Aorta (tissue), 5 donors: ENCODE measurements at regions of chr17 and their contacts with region 1.

Region 1: DNA sequence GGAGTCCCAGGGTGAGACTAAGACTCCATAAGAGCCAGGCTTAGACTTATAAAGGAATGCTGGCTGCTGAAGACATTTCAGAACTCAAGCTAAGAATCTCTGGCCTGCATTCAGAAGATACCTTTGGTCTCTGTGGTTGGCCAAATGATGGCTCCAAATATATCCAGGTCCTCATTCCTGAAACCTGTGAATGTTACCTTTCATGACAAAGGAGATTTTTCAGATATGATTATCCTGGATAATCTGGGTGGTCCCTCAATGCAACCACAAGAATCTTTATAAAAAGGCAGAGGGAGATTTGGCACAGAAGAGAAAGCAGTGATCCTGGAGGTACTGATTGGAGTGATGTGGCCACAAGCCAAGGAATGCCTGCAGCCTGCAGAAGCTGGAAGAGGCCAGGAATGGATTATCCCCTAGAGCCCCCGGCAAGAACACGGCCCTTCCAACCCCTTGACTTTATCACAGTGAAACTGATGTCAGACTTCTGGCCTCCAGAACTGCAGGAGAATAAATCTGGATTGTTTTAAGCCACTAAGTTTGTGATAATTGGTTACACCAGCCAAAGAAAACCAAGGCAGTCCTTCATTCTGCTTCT is 253.3 kb downstream of the SLC39A11 start:
- DNase-seq: no peak
- ATAC-seq: no peak
- H3K4me3 ChIP-seq: no peak overlapping the region
- H3K27ac ChIP-seq: no peak overlapping the region
- H3K4me1 ChIP-seq: no peaks in the 10 kb centered on the region
- H3K27me3 ChIP-seq: no peaks in the 10 kb centered on the region

Region 2: GRCh38 chr17:72775919-72776318 is 63.3 kb before region 1 on chr17:
- intact Hi-C with region 1: loop called in 1 of 2 experiments (anchors 10 kb)
- DNase-seq: no peak
- ATAC-seq: no peak
- H3K4me3 ChIP-seq: no peak overlapping the region
- H3K27ac ChIP-seq: no peak overlapping the region
- H3K4me1 ChIP-seq: no peaks in the 10 kb centered on the region
- H3K27me3 ChIP-seq: no peaks in the 10 kb centered on the region

Region 3: GRCh38 chr17:72788950-72789585 is 50.2 kb before region 1 on chr17:
- intact Hi-C with region 1: no loop called
- DNase-seq: no peak
- ATAC-seq: no peak
- H3K4me3 ChIP-seq: no peak overlapping the region
- H3K27ac ChIP-seq: no peak overlapping the region
- H3K4me1 ChIP-seq: no peaks in the 10 kb centered on the region
- H3K27me3 ChIP-seq: no peaks in the 10 kb centered on the region

Region 4: GRCh38 chr17:72872396-72872795 is 33.2 kb after region 1 on chr17:
- intact Hi-C with region 1: no loop called
- DNase-seq: no peak
- ATAC-seq: no peak
- H3K4me3 ChIP-seq: no peak overlapping the region
- H3K27ac ChIP-seq: no peak overlapping the region
- H3K4me1 ChIP-seq: no peaks in the 10 kb centered on the region
- H3K27me3 ChIP-seq: no peaks in the 10 kb centered on the region